GM10248 (cell line): ENCODE measurements at regions of chr14 and their contacts with region 1.

Region 1: GRCh38 chr14:93301821-93302447 is 30.9 kb downstream of the BTBD7 start:
- DNase-seq: no peak
- CTCF ChIP-seq: no peak

Region 2: DNA sequence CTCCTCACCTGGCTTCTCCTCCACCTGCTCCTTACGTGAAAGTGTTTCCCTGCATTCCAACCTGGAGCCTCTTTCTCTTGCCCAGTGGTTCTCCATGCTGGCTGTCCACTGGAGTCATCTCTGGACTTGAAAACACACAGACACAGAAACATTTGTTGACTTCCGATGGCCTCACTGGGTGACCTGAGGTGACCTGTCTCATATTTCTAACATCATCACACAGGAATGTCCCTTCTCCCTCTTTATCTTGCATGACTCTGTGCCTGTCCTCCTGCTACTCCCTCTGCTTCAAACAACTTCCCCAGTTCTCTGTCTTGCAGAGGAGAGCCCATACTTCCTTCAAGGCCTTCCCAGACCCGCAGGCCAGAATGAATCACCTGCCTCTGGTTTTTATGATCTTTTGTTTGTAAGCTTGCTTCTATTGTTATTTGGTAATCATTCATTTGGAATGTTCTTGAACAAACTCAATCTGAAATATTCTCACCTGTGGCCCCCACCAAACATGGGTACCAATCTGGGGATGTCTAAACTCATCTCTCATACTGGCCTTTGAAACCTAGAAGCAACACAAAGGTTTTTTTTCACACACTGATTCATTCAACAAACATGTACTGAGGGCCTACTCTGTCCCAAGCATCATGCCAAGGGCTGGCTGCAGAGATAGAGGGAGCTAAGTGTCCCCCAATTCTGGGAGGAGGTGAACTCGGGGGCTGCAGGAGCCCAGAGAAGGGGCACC is 798.0 kb before region 1 on chr14:
- CTCF ChIA-PET with region 1: no interaction called
- POLR2A ChIA-PET with region 1: no interaction called
- DNase-seq: no peak
- CTCF ChIP-seq: no peak

Region 3: GRCh38 chr14:93200553-93200952 is 101.4 kb before region 1 on chr14:
- CTCF ChIA-PET with region 1: no interaction called
- POLR2A ChIA-PET with region 1: no interaction called
- DNase-seq: no peak
- CTCF ChIP-seq: no peak

Region 4: GRCh38 chr14:93245764-93246420 is 56.0 kb before region 1 on chr14:
- CTCF ChIA-PET with region 1: no interaction called
- POLR2A ChIA-PET with region 1: no interaction called
- DNase-seq: no peak
- CTCF ChIP-seq: no peak

Region 5: DNA sequence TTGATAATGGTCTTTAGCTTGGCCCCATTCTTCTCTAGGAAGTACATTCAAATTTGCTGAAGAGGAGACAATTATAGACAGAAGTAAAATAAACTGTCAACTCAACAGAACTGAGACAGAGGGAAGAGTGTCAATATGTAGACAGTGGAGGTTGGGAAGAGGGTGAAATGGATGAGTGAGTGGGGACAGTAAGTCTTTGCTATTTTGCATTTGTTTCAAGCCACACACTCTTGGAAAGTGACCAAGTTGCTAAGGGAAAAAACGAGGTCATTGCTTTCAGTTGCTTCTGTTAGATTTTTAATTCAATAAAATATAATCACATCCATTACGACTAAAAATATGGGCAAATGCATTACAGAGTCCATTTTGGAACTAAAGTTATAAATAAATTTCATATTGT is 16.9 kb before region 1 on chr14:
- CTCF ChIA-PET with region 1: interaction called, 12 read pairs
- POLR2A ChIA-PET with region 1: no interaction called
- DNase-seq: no peak
- CTCF ChIP-seq: no peak

Region 6: DNA sequence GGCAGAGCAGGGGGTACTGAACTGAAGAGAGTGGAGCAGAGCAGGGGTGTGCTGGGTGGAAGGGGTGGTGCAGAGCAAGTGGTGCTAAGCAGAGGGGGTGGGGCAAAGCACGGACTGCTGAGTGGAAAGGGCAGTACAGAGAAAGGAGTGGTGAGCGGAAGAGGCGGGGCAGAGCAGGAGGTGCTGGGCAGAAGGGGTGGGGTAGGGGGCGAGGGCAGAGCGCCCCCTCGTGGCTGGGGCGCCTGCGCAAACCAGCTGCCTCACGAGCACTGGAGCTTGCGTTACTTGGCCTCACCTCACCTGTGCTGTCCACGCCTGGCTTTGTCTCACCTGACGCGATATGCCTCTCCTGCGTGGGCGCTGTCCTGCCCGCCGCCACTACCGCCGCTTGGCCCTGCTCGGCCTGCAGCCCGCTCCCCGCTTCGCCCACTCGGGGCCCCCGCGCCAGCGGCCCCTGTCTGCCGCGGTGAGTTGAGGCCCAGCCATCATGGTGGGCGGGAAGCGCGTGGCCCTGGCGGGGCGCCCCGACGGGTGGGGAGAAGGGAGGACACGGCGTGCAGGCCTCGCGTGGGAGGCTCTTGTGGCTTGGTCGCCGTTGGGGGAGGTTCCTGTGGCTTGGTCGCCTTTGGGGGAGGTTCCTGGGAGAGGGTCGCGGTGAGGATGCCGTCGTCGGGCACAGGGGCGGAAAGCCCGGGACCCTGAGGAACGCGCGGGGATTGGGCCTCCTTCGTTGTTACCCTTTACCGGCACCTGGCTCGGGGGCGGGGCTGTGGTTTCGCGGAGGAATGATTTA is 45.2 kb after region 1 on chr14 and contains the start of gene COX8C:
- CTCF ChIA-PET with region 1: no interaction called
- POLR2A ChIA-PET with region 1: no interaction called
- DNase-seq: no peak
- CTCF ChIP-seq: no peak

Region 7: GRCh38 chr14:93510066-93510465 is 208.1 kb after region 1 on chr14:
- CTCF ChIA-PET with region 1: no interaction called
- POLR2A ChIA-PET with region 1: interaction called, 10 read pairs
- DNase-seq: no peak
- CTCF ChIP-seq: no peak